GM10248 (cell line): ENCODE measurements at regions of chr20 and their contacts with region 1.

Region 1: DNA sequence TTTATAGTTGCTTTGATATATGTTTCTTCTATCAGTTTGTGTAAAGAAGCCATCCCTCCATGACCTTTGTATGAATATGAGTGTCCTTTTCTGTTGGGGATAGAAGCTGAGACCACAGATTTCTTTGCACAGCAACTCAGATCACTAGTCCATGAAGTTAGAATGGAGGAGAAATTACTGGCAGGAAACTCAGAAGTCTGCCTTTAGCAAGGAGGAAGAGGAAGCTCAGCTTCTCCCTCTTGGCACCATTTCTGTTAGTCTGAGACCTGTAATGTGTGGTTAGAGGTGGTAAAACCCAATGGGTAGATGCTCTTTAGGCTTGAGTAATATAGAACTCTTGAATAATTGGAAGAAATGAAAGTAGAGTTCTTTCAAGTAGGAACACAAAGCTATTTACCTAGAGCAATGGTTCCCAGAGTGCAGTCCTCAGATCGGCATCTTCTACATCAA is 995.3 kb upstream of the FLRT3 start:
- DNase-seq: no peak
- CTCF ChIP-seq: no peak

Region 2: DNA sequence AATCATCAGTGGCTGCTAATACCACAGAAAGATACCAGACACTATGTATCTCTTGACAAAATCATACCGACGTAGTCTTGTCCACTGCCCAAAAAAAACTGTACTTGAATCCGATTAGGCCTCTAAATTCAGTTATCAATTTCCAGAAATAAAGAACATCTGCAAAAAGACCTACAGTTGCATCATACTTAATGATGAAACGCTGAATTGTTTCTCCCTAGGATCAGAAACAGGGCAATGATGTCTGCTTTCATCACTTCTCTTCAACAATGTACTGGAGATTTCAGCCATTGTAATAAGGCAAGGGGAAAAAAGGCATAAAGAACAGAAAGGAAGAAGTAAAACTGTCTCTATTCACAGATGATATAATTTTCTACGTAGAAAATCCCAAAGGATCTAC is 1846.0 kb before region 1 on chr20:
- CTCF ChIA-PET with region 1: no interaction called
- POLR2A ChIA-PET with region 1: no interaction called
- DNase-seq: no peak
- CTCF ChIP-seq: no peak

Region 3: DNA sequence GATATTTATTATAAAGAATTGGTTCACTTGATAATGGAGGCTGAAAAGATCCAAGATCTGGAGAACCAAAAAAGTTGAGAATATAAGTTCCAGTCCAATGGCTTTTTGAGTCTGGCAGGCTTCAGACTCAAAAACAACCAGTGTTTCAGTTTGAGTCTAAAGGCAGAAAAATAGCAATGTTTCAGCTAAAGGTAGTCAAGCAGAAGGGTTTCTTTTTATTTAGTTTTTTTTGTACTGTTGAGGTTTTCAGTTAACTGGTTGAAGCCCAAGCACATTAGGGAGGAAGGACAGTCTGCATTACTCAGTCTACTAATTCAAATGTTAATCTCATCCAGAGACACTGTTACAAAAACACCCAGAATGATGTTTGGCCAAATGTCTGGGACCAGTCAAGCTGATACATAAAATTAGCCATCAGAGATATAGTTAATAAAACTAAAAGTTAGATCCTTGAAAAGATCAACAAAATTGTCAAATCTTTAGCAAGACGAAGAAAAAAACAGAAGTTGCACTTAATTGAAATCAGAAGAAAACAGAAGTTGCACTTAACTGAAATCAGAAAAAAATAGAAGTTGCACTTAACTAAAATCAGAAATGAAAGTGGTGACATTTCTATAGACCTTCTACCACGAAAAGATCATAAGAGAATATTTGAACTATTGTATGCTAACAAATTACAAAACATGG is 15.0 kb before region 1 on chr20:
- CTCF ChIA-PET with region 1: interaction called, 10 read pairs
- POLR2A ChIA-PET with region 1: no interaction called
- DNase-seq: peak; percentile 14
- CTCF ChIP-seq: no peak